ENCODE measurements at regions of chr17 and their contacts with region 1.

Region 1: GRCh38 chr17:49788478-49789242 is at the start of gene KAT7:
- DNase-seq: peak; percentile 99
- H3K4me3 Mint-ChIP-seq: peak within 1 kb of the TSS; percentile 94
- H3K27ac Mint-ChIP-seq: peak within 1 kb of the TSS; percentile 99
- H3K4me1 Mint-ChIP-seq: peaks cover 35% of the 10 kb centered on the region
- H3K27me3 Mint-ChIP-seq: no peaks in the 10 kb centered on the region
- total RNA-seq, gene KAT7: 68.5 and 71.1 TPM in 2 replicates

Region 2: GRCh38 chr17:49567871-49568694 is 220.6 kb before region 1 on chr17:
- intact Hi-C with region 1: loop called (anchors 1 kb)
- DNase-seq: peak; percentile 74
- H3K4me3 Mint-ChIP-seq: peak overlapping the region; percentile 55
- H3K27ac Mint-ChIP-seq: no peak overlapping the region
- H3K4me1 Mint-ChIP-seq: peaks cover 39% of the 10 kb centered on the region
- H3K27me3 Mint-ChIP-seq: peaks cover 36% of the 10 kb centered on the region

Region 3: DNA sequence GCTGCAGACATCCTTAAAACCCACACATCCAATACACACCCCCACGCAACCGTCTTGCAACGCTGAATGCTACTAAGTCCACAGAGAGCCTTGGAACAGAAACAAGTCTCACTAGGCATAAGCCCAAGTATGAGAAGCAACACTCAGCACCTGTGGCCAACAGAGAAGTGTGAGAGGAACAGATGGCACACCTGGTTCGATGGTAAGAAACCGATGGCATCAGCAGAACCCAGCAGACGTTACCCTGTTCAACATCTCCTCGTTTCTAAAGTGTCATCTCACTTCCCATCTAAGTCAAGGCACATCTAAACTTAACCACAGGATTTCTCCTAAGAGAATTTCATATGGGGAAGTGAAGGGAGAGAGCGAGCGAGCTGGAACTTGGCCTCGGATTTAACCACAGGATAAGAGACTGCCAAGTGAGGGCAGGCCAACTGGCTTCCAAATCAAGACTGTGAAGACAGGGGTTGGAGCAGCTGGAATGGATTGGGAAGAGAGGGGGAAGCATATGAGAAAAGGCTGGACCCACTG is 172.0 kb before region 1 on chr17:
- intact Hi-C with region 1: no loop called
- DNase-seq: no peak
- H3K4me3 Mint-ChIP-seq: no peak overlapping the region
- H3K27ac Mint-ChIP-seq: no peak overlapping the region
- H3K4me1 Mint-ChIP-seq: peaks cover 14% of the 10 kb centered on the region
- H3K27me3 Mint-ChIP-seq: no peaks in the 10 kb centered on the region

Region 4: GRCh38 chr17:49739641-49740271 is 48.9 kb before region 1 on chr17:
- intact Hi-C with region 1: loop called (anchors 1 kb)
- DNase-seq: peak; percentile 83
- H3K4me3 Mint-ChIP-seq: peak overlapping the region; percentile 80
- H3K27ac Mint-ChIP-seq: peak overlapping the region; percentile 99
- H3K4me1 Mint-ChIP-seq: peaks cover 72% of the 10 kb centered on the region
- H3K27me3 Mint-ChIP-seq: no peaks in the 10 kb centered on the region

Region 5: DNA sequence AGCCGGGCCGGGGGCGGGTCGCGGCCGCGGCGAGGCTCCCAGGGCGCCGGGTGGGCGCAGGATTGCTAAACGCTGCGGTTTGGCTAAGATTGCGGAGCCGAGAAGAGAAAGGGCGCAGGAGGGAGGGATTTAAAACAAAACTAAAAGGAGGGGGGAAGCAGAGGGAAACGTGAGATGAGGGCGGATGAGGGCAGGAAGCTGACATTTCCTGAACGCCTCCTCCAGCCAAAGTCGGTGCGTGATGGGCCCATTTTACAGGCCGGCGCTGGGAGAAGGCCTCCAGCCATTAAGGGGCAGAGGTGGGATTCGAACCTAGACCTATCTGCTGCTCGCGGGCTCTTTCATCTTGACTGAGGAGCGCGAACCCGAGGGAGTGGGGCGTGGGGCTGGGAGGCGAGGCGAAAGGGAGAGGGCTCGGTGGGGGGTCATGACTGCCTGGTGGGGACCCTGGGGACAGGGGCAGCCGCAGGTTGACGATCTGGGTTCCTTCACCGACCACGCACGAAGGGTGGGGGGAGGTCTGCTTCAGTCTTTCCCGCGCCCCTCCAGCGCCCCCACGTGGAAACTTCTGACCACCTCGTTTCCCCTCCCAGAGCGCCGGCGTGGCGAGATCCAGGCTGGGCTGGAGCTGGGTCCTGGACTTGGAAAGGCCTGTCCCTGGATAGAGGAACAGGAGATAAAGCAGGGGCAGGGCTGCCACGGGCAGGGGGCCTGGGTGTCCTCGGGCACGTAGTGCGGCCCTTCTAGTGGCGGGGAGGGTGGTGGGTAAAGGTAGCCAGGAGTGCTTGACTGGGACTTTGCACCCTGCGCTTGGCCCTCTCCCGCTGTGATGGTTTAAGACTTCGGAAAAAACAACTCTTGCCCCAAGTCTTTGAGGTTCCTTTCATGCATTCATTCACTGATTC is 63.0 kb after region 1 on chr17:
- intact Hi-C with region 1: loop called (anchors 2 kb)
- DNase-seq: peak; percentile 46
- H3K4me3 Mint-ChIP-seq: peak overlapping the region; percentile 79
- H3K27ac Mint-ChIP-seq: peak overlapping the region; percentile 78
- H3K4me1 Mint-ChIP-seq: peaks cover 12% of the 10 kb centered on the region
- H3K27me3 Mint-ChIP-seq: peaks cover 15% of the 10 kb centered on the region

Measured in activated T-helper 1 cell treated with anti-CD3 and anti-CD28 coated beads, Interleukin-12 subunit alpha, Interleukin-12 subunit beta, Interleukin-2, Interleukin-4 antibody, amounts not matched to agents 30 ng/mL and 10 ng/mL and 1 ng/mL, durations not matched to agents 14 hours and 24 hours and 36 hours (primary cell).